Gastrocnemius medialis (tissue), 4 donors: ENCODE measurements at regions of chr2 and their contacts with region 1.

Region 1: GRCh38 chr2:134918526-134919340 is at the start of gene CCNT2:
- DNase-seq: peak; percentile 97 to 99
- ATAC-seq: peak; percentile 86 to 89
- H3K4me3 ChIP-seq: peak within 1 kb of the TSS; percentile 96 to 99 (median 96)
- H3K27ac ChIP-seq: peak within 1 kb of the TSS; percentile 99 to 100 (median 100)
- H3K4me1 ChIP-seq: peaks cover 41 to 45% of the 10 kb centered on the region in 2 donors
- H3K27me3 ChIP-seq: no peaks in the 10 kb centered on the region
- CTCF ChIP-seq: peak in 3 of 5 experiments; percentile 22 to 34 (median 22)
- POLR2A ChIP-seq: peak; percentile 17 to 44
- total RNA-seq, gene CCNT2: 11.6 to 28.4 (median 18.6) TPM

Region 2: GRCh38 chr2:134906721-134907120 is 12.0 kb before region 1 on chr2:
- in situ Hi-C with region 1: no loop called
- intact Hi-C with region 1: no loop called
- DNase-seq: no peak
- ATAC-seq: no peak
- H3K4me3 ChIP-seq: no peak overlapping the region
- H3K27ac ChIP-seq: no peak overlapping the region
- H3K4me1 ChIP-seq: no peaks in the 10 kb centered on the region
- H3K27me3 ChIP-seq: no peaks in the 10 kb centered on the region
- CTCF ChIP-seq: no peak
- POLR2A ChIP-seq: no peak

Region 3: DNA sequence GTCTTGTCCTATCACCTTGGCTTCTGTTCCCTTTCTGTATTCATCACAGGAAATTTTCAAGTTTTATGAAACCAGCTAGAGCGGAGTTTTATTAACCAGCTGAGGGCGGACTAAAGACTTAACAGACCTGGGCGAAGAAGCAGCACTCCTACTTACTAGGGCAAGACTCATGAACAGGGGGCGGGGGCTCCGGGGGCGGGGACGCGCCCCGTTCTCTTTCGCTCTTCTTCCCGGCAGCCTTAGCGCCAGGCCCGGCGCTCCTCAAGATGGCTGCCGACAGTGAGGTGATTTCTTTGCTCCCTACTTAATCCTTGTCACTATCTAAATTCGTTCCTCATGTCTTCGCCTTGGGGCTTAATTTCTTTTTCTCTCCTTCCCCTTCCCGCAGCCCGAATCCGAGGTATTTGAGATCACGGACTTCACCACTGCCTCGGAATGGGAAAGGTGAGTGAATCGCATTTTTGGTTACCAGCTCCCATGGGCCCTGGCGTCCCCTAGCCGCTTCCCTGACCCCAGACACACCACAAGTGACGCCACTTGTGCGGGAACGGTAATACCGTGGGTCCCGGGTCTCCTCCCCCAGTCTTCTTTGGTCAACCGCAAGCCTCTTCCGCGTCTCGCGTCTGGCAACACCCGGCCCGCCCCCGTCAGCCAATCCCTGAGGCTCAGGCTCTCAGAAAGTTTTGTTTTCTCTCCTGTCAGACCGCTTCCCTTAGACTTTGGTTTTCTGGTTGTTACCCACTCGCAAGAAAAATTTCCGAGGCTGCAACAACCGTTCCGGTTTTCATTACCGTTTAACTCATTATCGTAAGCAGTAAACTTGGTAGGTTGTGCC is 133.5 kb after region 1 on chr2 and contains the start of gene RAB3GAP1:
- in situ Hi-C with region 1: loop called in 1 of 4 experiments (anchors 10 kb)
- intact Hi-C with region 1: loop called (anchors 5 kb)
- DNase-seq: peak; percentile 53 to 67
- ATAC-seq: peak; percentile 89 to 91
- H3K4me3 ChIP-seq: peak within 1 kb of the TSS; percentile 84 to 92 (median 88)
- H3K27ac ChIP-seq: peak within 1 kb of the TSS; percentile 93 to 98 (median 95)
- H3K4me1 ChIP-seq: peaks cover 28 to 29% of the 10 kb centered on the region in 2 donors
- H3K27me3 ChIP-seq: no peaks in the 10 kb centered on the region
- CTCF ChIP-seq: no peak
- POLR2A ChIP-seq: peak; percentile 45 to 48
- total RNA-seq, gene RAB3GAP1: 44.3 to 51.7 (median 46.5) TPM

Region 4: DNA sequence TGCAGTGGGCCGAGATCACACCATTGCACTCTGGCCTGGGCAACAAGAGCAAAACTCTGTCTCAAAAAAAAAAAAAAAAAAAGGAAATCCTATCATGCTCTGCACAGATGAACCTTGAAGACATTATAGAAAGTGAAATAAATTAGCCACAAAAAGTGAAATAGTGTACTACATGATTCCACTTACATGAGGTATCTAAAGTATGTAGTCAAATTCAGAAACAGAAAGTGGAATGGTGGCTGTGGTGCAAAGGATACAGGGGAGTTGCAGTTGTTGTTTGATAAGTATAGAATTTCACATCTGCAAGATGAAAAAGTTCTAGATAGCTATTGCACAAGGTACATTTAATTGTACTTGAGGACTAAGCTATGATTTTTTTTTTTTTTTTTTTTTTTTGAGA is 607.1 kb after region 1 on chr2:
- in situ Hi-C with region 1: loop called in 1 of 4 experiments (anchors 10 kb)
- intact Hi-C with region 1: loop called (anchors 1 kb)
- DNase-seq: no peak
- ATAC-seq: no peak
- H3K4me3 ChIP-seq: no peak overlapping the region
- H3K27ac ChIP-seq: no peak overlapping the region
- H3K4me1 ChIP-seq: peaks cover 3 to 7% of the 10 kb centered on the region in 2 donors
- H3K27me3 ChIP-seq: no peaks in the 10 kb centered on the region
- CTCF ChIP-seq: no peak
- POLR2A ChIP-seq: no peak